Ovary (tissue), 10 donors: ENCODE measurements at regions of chr5 and their contacts with region 1.

Region 1: GRCh38 chr5:141557681-141558136 is 61.1 kb downstream of the DIAPH1 start:
- DNase-seq: peak; percentile 78 to 89 (median 84)
- H3K4me3 ChIP-seq: no peak overlapping the region
- H3K27ac ChIP-seq: peak overlapping the region; percentile 10 to 39
- H3K4me1 ChIP-seq: peaks cover 2% of the 10 kb centered on the region
- H3K27me3 ChIP-seq: no peaks in the 10 kb centered on the region
- CTCF ChIP-seq: peak; percentile 79 to 82 (median 79)
- EP300 ChIP-seq: no peak
- POLR2A ChIP-seq: no peak

Region 2: DNA sequence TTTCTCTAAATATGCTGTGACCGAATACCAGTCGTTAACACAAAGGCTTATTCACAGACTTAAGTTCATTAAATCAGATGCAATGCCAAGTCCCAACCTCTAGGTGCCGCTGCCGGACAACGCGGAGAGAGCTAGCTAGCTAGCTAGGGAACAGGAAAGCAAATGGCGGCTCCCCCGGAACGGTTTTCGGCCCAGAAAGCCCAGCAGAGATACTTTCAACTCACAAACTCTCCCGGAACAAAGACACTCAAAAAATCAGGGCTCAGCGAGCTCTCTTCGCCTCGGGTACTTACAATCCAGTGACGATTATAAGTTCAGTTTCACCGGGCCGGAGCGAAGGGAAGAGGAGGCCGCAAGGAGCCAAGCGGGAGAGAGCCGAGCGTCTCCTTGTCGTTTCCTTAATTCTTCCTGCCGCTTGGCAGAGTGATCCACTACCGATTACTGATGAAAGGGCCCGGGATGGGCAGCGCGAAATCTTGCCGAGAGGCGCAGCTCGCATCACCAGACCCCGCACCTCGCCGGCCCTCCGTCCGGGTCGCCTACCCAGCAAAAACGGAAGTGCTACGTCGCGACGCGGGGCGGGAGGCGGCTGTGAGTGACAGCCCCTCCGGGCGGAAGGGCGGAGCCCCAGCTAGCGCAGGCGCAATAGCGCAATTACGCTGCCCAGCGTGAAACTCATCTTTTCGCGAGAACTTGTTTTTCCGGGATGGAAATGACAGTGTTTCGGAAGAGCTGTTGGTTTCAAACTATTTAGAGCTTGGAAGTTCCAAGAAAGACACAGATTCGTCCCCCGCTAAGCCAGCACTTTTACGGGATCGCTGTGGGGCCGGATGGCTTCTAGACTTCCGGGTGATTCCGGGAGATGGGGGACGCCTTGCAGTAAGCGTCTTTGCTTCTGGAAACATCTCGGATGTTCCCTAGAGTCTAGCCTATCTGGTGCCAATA is 237.2 kb before region 1 on chr5 and contains the start of gene TAF7:
- intact Hi-C with region 1: loop called in 2 of 4 experiments (anchors 5 to 10 kb)
- DNase-seq: peak; percentile 92 to 95 (median 95)
- H3K4me3 ChIP-seq: peak within 1 kb of the TSS; percentile 84
- H3K27ac ChIP-seq: peak within 1 kb of the TSS; percentile 85 to 99
- H3K4me1 ChIP-seq: peaks cover 3% of the 10 kb centered on the region
- H3K27me3 ChIP-seq: no peaks in the 10 kb centered on the region
- CTCF ChIP-seq: peak; percentile 61 to 84 (median 66)
- EP300 ChIP-seq: peak; percentile 37
- POLR2A ChIP-seq: peak; percentile 98
- total RNA-seq, gene TAF7: 65.1 to 141 (median 102) TPM

Region 3: DNA sequence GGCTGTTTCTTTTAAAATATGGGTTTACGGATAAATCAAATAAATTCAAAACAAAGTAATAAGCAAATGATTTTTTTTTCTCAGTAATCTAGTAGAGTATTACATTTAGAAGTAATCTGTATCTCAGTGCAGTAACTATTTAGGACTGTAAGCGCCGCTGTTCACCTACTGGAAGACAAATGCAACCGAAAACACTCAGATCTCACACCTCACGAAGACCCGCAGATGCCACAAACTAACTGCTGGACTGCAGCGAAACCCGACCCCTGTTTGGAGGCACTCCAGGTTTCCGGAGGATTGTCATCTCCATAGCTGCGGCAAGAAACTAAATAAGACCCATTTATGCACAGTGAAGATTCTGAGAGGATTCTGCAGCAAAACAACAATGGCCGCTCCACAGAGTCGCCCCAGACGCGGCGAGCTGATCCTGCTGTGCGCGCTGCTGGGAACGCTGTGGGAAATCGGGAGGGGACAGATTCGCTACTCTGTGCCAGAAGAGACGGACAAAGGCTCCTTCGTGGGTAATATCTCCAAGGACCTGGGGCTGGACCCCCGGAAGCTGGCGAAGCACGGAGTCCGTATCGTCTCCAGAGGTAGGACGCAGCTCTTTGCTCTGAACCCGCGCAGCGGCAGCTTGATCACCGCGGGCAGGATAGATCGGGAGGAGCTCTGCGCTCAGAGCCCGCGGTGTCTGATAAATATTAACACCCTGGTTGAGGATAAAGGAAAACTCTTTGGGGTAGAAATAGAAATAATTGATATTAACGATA is 165.1 kb before region 1 on chr5 and contains the start of gene PCDHGA8:
- intact Hi-C with region 1: loop called in 1 of 4 experiments (anchors 10 kb)
- DNase-seq: no peak
- H3K4me3 ChIP-seq: no peak within 1 kb of the TSS
- H3K27ac ChIP-seq: no peak within 1 kb of the TSS
- H3K4me1 ChIP-seq: no peaks in the 10 kb centered on the region
- H3K27me3 ChIP-seq: no peaks in the 10 kb centered on the region
- CTCF ChIP-seq: no peak
- EP300 ChIP-seq: no peak
- POLR2A ChIP-seq: no peak
- total RNA-seq, gene PCDHGA8: 2.9 to 7.6 (median 3.8) TPM

Region 4: DNA sequence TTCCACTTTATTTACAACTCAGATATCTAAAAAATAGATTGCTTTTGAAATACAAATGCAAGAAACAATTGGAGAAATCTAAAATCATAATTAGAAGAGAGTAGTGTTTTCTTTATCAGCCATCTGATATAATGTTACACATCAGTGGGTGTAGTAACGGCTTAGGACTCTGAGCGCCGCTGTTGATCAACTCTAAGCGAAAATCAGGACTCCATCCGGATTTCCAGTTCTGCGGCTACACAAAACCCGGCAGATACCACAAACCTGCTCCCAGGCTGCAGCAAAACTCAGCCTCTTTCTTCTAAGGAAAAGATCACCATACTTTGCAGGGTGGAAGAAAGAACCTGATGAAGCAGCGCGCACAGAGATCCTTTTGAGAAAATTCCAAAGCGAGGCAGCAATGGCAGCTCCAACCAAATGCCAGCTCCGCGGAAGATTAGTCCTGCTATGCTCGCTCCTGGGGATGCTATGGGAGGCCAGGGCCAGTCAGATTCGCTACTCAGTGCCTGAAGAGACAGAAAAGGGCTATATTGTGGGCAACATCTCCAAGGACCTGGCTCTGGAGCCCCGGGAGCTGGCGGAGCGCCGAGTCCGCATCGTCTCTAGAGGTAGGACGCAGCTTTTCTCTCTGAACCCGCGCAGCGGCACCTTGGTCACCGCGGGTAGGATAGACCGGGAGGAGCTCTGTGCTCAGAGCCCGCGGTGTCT is 155.0 kb before region 1 on chr5 and contains the start of gene PCDHGA9:
- intact Hi-C with region 1: loop called in 2 of 4 experiments (anchors 10 kb)
- DNase-seq: peak in 1 of 5 donors; percentile 28
- H3K4me3 ChIP-seq: peak within 1 kb of the TSS; percentile 12
- H3K27ac ChIP-seq: no peak within 1 kb of the TSS
- H3K4me1 ChIP-seq: no peaks in the 10 kb centered on the region
- H3K27me3 ChIP-seq: no peaks in the 10 kb centered on the region
- CTCF ChIP-seq: no peak
- EP300 ChIP-seq: no peak
- POLR2A ChIP-seq: no peak
- total RNA-seq, gene PCDHGA9: 5.4 to 11.7 (median 10.6) TPM

Region 5: DNA sequence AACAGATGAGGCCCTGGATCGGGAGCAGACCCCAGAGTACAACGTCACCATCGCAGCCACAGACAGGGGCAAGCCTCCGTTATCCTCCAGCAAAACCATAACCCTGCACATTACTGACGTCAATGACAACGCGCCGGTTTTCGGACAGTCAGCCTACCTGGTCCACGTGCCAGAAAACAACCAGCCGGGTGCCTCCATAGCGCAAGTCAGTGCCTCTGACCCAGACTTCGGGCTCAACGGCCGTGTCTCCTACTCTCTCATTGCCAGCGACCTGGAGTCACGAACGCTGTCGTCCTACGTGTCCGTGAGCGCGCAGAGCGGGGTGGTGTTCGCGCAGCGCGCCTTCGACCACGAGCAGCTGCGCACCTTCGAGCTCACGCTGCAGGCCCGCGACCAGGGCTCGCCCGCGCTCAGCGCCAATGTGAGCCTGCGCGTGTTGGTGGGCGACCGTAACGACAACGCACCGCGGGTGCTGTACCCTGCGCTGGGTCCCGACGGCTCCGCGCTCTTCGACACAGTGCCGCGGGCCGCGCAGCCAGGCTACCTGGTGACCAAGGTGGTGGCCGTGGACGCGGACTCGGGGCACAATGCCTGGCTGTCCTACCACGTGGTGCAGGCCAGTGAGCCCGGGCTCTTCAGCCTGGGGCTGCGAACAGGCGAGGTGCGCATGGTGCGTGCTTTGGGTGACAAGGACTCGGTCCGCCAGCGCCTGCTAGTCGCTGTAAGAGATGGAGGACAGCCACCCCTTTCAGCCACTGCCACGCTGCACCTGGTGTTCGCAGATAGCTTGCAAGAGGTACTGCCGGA is 138.4 kb before region 1 on chr5:
- intact Hi-C with region 1: loop called in 1 of 4 experiments (anchors 5 kb)
- DNase-seq: no peak
- H3K4me3 ChIP-seq: no peak overlapping the region
- H3K27ac ChIP-seq: no peak overlapping the region
- H3K4me1 ChIP-seq: peaks cover 2% of the 10 kb centered on the region
- H3K27me3 ChIP-seq: no peaks in the 10 kb centered on the region
- CTCF ChIP-seq: no peak
- EP300 ChIP-seq: no peak
- POLR2A ChIP-seq: no peak

Region 6: DNA sequence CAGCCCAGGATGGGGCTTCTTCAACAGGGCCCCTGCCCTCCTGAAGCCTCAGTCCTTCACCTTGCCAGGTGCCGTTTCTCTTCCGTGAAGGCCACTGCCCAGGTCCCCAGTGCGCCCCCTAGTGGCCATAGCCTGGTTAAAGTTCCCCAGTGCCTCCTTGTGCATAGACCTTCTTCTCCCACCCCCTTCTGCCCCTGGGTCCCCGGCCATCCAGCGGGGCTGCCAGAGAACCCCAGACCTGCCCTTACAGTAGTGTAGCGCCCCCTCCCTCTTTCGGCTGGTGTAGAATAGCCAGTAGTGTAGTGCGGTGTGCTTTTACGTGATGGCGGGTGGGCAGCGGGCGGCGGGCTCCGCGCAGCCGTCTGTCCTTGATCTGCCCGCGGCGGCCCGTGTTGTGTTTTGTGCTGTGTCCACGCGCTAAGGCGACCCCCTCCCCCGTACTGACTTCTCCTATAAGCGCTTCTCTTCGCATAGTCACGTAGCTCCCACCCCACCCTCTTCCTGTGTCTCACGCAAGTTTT is 45.3 kb before region 1 on chr5:
- intact Hi-C with region 1: loop called in 2 of 4 experiments (anchors 5 kb)
- DNase-seq: peak; percentile 82 to 91 (median 89)
- H3K4me3 ChIP-seq: peak overlapping the region; percentile 64
- H3K27ac ChIP-seq: peak overlapping the region; percentile 74 to 82
- H3K4me1 ChIP-seq: peaks cover 17% of the 10 kb centered on the region
- H3K27me3 ChIP-seq: no peaks in the 10 kb centered on the region
- CTCF ChIP-seq: peak; percentile 76 to 82 (median 80)
- EP300 ChIP-seq: no peak
- POLR2A ChIP-seq: no peak

Region 7: GRCh38 chr5:142998316-142999020 is 1440.8 kb after region 1 on chr5:
- intact Hi-C with region 1: no loop called
- DNase-seq: no peak
- H3K4me3 ChIP-seq: no peak overlapping the region
- H3K27ac ChIP-seq: no peak overlapping the region
- H3K4me1 ChIP-seq: peaks cover 7% of the 10 kb centered on the region
- H3K27me3 ChIP-seq: no peaks in the 10 kb centered on the region
- CTCF ChIP-seq: no peak
- EP300 ChIP-seq: no peak
- POLR2A ChIP-seq: no peak